ENCODE measurements at regions of chr4 and their contacts with region 1.

Region 1: GRCh38 chr4:111475001-111475400 is 670.3 kb upstream of the FAM241A start:
- DNase-seq: peak; percentile 39
- ATAC-seq: no peak
- H3K4me3 ChIP-seq: no peak overlapping the region
- H3K27ac ChIP-seq: no peak overlapping the region
- H3K4me1 ChIP-seq: no peaks in the 10 kb centered on the region
- H3K27me3 ChIP-seq: no peaks in the 10 kb centered on the region
- CTCF ChIP-seq: peak; percentile 38
- POLR2A ChIP-seq: no peak
- RAD21 ChIP-seq: peak; percentile 53

Region 2: GRCh38 chr4:110959041-110959643 is 515.9 kb before region 1 on chr4:
- CTCF ChIA-PET with region 1: no interaction called
- POLR2A ChIA-PET with region 1: no interaction called
- dilution Hi-C with region 1: no loop called
- in situ Hi-C with region 1: no loop called
- intact Hi-C with region 1: loop called (anchors 10 kb)
- DNase-seq: peak; percentile 30
- ATAC-seq: peak; percentile 66; the same call in 1 of the 2 replicates
- H3K4me3 ChIP-seq: no peak overlapping the region
- H3K27ac ChIP-seq: no peak overlapping the region
- H3K4me1 ChIP-seq: no peaks in the 10 kb centered on the region
- H3K27me3 ChIP-seq: peaks cover 2% of the 10 kb centered on the region; the same call in 1 of the 2 replicates
- CTCF ChIP-seq: peak; percentile 50
- POLR2A ChIP-seq: no peak
- RAD21 ChIP-seq: peak; percentile 48

Region 3: GRCh38 chr4:111066887-111067286 is 408.1 kb before region 1 on chr4:
- CTCF ChIA-PET with region 1: no interaction called
- POLR2A ChIA-PET with region 1: no interaction called
- dilution Hi-C with region 1: no loop called
- in situ Hi-C with region 1: no loop called
- intact Hi-C with region 1: no loop called
- DNase-seq: peak; percentile 39
- ATAC-seq: peak; percentile 56
- H3K4me3 ChIP-seq: no peak overlapping the region
- H3K27ac ChIP-seq: no peak overlapping the region
- H3K4me1 ChIP-seq: no peaks in the 10 kb centered on the region
- H3K27me3 ChIP-seq: no peaks in the 10 kb centered on the region
- CTCF ChIP-seq: no peak
- POLR2A ChIP-seq: no peak
- RAD21 ChIP-seq: no peak

Measured in IMR-90 (cell line).